ENCODE measurements at regions of chr11 and their contacts with region 1.

Region 1: GRCh38 chr11:46238967-46239800 is 38.3 kb upstream of the CREB3L1 start:
- DNase-seq: peak; percentile 86
- H3K4me3 ChIP-seq: peak overlapping the region; percentile 7 to 55 (median 30)
- H3K27ac ChIP-seq: peak overlapping the region; percentile 64 to 86 (median 78)
- H3K4me1 ChIP-seq: peaks cover 17 to 43% (median 34%) of the 10 kb centered on the region in 4 donors
- H3K27me3 ChIP-seq: peaks cover 36% of the 10 kb centered on the region
- CTCF ChIP-seq: peak; percentile 96 to 100 (median 99)
- EP300 ChIP-seq: no peak
- POLR2A ChIP-seq: no peak

Region 2: GRCh38 chr11:45859661-45860140 is 379.5 kb before region 1 on chr11:
- in situ Hi-C with region 1: no loop called
- intact Hi-C with region 1: no loop called
- DNase-seq: peak; percentile 94
- H3K4me3 ChIP-seq: no peak overlapping the region
- H3K27ac ChIP-seq: peak overlapping the region; percentile 76 to 89 (median 83)
- H3K4me1 ChIP-seq: peaks cover 29 to 59% (median 41%) of the 10 kb centered on the region in 4 donors
- H3K27me3 ChIP-seq: no peaks in the 10 kb centered on the region
- CTCF ChIP-seq: no peak
- EP300 ChIP-seq: peak; percentile 81
- POLR2A ChIP-seq: peak; percentile 32

Region 3: DNA sequence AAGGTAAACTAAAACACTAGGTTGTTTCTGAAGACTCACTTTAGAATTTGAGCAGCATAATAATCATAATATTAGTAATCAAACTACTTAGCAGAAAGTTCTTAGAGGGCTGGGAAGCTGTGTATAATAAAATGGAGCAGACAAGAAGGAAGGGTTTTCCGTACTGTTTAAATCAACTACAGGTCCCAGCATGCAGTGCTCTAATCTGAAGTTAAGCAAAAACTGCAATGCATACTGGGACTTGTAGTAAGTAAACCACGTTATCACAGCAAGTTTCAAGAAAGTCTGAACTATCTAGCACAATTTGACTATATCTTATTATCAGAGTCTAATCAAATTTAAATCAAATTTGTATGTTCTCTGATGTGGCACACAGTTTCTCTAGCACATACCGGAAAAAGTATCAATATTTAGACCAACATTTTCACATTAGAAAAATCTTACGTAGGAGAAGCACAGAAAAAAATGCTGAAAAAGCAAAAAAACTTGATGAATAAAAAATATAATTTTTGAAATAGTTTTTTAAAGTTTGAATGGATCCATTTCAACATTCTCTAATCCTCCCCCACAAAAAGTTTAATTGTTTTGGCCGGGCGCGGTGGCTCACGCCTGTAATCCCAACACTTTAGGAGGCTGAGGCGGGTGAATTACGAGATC is 126.1 kb before region 1 on chr11:
- in situ Hi-C with region 1: no loop called
- intact Hi-C with region 1: no loop called
- DNase-seq: no peak
- H3K4me3 ChIP-seq: no peak overlapping the region
- H3K27ac ChIP-seq: no peak overlapping the region
- H3K4me1 ChIP-seq: peaks cover 12 to 47% (median 21%) of the 10 kb centered on the region in 4 donors
- H3K27me3 ChIP-seq: no peaks in the 10 kb centered on the region
- CTCF ChIP-seq: no peak
- EP300 ChIP-seq: no peak
- POLR2A ChIP-seq: no peak

Region 4: DNA sequence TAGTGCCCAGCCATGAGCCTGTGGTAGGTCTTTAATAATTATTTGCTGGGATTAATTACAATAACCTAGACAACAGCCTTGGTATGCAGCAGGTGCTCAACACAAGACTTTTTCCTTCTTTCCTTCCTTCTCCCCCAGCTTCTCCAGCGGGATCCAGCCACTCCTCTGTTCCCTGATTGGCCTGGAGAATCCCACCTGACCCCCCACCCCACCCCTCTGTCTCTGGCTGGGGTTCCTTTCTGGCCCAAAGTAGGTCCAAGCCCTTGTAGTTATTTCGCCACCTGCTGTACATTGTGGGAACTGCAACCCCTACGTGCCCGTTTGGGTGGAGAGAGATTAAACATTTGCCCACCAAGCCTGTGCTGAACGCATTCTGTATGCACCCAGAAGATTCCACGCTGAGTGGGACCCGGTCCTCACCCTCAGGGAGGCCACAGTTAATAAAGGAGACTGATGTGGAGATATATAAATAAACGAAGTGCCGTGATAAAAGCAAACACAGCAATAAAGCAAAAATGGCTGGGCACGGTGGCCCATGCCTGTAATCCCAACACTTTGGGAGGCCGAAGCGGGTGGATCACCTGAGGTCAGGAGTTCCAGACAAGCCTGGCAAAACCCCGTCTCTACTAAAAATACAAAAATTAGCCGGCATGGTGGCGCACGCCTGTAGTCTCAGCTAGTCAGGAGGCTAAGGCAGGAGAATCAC is 76.0 kb after region 1 on chr11:
- in situ Hi-C with region 1: loop called (anchors 5 to 10 kb)
- intact Hi-C with region 1: no loop called
- DNase-seq: peak; percentile 72
- H3K4me3 ChIP-seq: no peak overlapping the region
- H3K27ac ChIP-seq: no peak overlapping the region
- H3K4me1 ChIP-seq: peaks cover 0 to 9% (median 0%) of the 10 kb centered on the region in 4 donors
- H3K27me3 ChIP-seq: no peaks in the 10 kb centered on the region
- CTCF ChIP-seq: peak; percentile 89 to 96 (median 91)
- EP300 ChIP-seq: no peak
- POLR2A ChIP-seq: no peak